ENCODE measurements at regions of chr7 and their contacts with region 1.

Region 1: DNA sequence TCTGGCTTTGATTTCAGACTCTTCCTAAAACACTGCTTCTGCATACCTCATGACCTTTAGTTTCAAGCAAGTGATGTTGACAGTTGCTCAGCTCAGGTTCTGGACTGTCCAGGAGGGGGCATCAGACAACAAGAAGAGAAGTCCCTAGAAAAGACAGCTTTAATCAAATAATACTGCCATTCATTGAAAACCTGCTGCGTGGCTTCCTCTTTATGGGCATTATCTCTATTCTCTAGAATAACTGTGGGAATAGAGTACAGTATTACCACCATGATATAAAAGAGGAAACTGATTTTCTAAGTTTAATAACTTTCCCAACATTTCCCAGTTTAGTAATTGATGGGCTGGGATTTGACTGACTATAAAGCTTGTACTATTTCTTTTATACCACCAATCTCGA is 170.4 kb downstream of the SNX13 start:
- DNase-seq: peak; percentile 78
- ATAC-seq: peak; percentile 86
- H3K4me3 Mint-ChIP-seq: no peak overlapping the region
- H3K27ac Mint-ChIP-seq: no peak overlapping the region
- H3K4me1 Mint-ChIP-seq: peaks cover 47% of the 10 kb centered on the region
- H3K27me3 Mint-ChIP-seq: no peaks in the 10 kb centered on the region
- CTCF ChIP-seq: peak; percentile 59

Region 2: GRCh38 chr7:17680943-17681351 is 89.0 kb before region 1 on chr7:
- CTCF ChIA-PET with region 1: interaction called, 11 read pairs
- POLR2A ChIA-PET with region 1: no interaction called
- DNase-seq: no peak
- ATAC-seq: peak; percentile 24; the same call in 1 of the 2 replicates
- H3K4me3 Mint-ChIP-seq: no peak overlapping the region
- H3K27ac Mint-ChIP-seq: no peak overlapping the region
- H3K4me1 Mint-ChIP-seq: peaks cover 12% of the 10 kb centered on the region
- H3K27me3 Mint-ChIP-seq: no peaks in the 10 kb centered on the region
- CTCF ChIP-seq: peak; percentile 40

Region 3: DNA sequence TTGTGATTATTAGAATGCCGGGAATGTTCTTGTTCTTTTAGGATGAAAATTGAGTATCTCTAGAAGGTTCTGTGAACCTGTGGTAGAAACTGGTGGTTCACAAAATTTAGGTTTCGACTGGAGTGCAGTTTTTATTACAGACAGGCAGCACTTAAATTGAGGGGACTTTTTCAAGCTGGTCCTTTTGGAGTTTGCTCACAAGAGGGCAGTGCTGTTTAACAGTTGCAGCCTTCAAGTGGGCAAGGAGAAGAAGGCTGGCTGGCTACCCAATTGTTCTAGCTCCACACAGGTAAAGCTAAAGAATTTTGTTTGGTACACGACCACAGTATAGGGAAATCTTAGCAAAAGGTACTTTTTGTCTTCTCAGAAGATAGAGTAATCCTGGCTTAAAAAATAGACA is 63.2 kb before region 1 on chr7:
- CTCF ChIA-PET with region 1: interaction called, 38 read pairs
- POLR2A ChIA-PET with region 1: interaction called, 6 read pairs
- DNase-seq: peak; percentile 60
- ATAC-seq: peak; percentile 89
- H3K4me3 Mint-ChIP-seq: no peak overlapping the region
- H3K27ac Mint-ChIP-seq: no peak overlapping the region
- H3K4me1 Mint-ChIP-seq: peaks cover 7% of the 10 kb centered on the region; the same call in 1 of the 2 replicates
- H3K27me3 Mint-ChIP-seq: no peaks in the 10 kb centered on the region
- CTCF ChIP-seq: peak; percentile 46; the same call in 1 of the 2 replicates

Region 4: DNA sequence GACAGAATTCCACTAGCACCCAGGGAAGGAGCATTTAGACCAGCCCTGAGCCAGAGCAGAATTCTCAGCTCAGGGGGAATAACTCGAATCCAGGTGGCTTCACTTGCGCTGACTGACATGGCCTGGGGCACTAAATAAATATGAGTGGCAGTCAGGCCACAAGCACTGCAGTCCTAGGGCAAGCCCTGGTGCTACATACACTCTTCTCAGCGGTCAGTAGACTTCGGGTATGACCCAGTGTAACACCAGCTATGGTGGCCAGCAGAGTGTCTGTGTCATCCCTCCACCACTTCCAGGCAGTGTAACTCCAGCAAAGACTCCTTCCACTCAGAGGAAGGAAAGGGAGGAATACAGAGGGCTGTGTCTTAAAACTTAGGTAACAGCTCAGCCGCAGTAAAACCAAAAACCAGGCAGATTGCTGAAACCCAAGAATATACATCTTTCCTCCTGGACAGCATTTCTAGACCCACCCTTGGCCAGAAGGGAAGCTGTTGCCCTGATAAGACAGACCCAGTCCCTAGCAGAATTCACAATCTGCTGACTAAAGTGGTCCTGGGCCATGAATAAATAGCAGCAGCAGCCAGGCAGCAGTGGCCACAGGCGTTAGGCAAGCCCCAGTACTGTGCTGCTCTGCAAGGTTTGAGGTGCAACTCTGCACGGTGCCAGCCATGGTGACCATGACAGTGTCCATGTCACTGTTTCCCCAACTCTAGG is 93.3 kb after region 1 on chr7:
- CTCF ChIA-PET with region 1: interaction called, 13 read pairs
- POLR2A ChIA-PET with region 1: no interaction called
- DNase-seq: no peak
- ATAC-seq: peak; percentile 71
- H3K4me3 Mint-ChIP-seq: no peak overlapping the region
- H3K27ac Mint-ChIP-seq: peak overlapping the region; percentile 43
- H3K4me1 Mint-ChIP-seq: peaks cover 16% of the 10 kb centered on the region
- H3K27me3 Mint-ChIP-seq: no peaks in the 10 kb centered on the region
- CTCF ChIP-seq: no peak

Region 5: DNA sequence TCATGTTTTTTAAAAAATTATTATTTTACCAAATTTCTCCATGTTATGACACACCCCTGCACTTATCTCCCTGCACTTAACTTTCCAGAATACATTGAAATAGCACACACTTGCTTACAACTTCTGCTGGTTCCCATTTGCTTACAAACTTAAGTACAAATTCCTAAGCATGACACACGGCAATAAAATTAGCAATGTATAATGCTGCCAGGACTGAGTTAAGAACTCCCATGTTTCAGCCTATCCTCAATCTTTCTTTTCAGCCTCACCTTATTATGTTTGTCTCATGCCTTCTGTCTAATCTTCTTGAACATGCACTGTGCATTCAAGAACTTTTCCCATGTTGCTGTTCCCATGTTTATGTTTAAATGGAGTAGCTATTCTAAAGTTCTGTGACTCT is 216.9 kb after region 1 on chr7:
- CTCF ChIA-PET with region 1: interaction called, 96 read pairs
- POLR2A ChIA-PET with region 1: no interaction called
- DNase-seq: no peak
- ATAC-seq: no peak
- H3K4me3 Mint-ChIP-seq: no peak overlapping the region
- H3K27ac Mint-ChIP-seq: no peak overlapping the region
- H3K4me1 Mint-ChIP-seq: peaks cover 3% of the 10 kb centered on the region
- H3K27me3 Mint-ChIP-seq: no peaks in the 10 kb centered on the region; the same call in 1 of the 2 replicates
- CTCF ChIP-seq: no peak

Region 6: DNA sequence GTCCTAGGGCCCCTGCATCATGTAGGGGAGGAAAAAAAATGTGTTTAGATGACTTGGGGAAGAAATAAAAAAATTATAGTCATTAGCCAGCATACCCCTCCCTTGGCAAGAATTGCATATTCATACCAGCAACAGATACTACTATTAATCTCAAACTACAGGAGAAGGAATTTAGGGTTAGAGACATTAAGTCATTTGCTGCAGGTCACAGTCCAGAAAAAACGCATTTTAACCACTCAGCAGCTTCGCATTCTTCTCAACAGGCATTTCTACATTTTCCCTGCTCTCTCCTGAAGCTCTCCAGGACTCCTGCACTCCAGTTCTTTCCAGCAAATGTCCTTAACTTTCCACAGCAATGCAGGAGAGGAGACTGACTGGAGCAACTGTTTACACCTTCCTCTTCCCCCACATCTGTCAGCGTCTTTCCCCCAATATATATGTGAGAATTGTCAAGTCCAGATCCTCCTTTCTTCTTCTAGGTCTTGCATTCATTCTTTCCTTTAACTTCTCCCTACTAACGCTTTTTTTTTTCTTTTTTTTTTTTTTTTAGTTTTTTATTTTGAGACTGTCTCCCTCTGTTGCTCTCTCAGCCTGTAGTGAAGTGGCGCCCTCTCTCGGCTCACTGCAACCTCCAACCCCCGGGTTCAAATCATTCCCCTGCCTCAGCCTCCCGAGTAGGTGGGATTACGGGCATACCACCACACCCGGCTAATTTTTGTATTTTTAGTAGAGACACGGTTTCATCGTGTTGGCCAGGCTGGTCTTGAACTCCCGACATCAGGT is 222.1 kb after region 1 on chr7:
- CTCF ChIA-PET with region 1: interaction called, 96 read pairs
- POLR2A ChIA-PET with region 1: no interaction called
- DNase-seq: peak; percentile 71
- ATAC-seq: peak; percentile 89
- H3K4me3 Mint-ChIP-seq: no peak overlapping the region
- H3K27ac Mint-ChIP-seq: no peak overlapping the region; the same call in 1 of the 2 replicates
- H3K4me1 Mint-ChIP-seq: peaks cover 6% of the 10 kb centered on the region
- H3K27me3 Mint-ChIP-seq: no peaks in the 10 kb centered on the region
- CTCF ChIP-seq: peak; percentile 33; the same call in 1 of the 2 replicates

Region 7: GRCh38 chr7:18064242-18064838 is 294.4 kb after region 1 on chr7:
- CTCF ChIA-PET with region 1: interaction called, 13 read pairs
- POLR2A ChIA-PET with region 1: no interaction called
- DNase-seq: peak; percentile 71
- ATAC-seq: peak; percentile 93
- H3K4me3 Mint-ChIP-seq: no peak overlapping the region
- H3K27ac Mint-ChIP-seq: no peak overlapping the region
- H3K4me1 Mint-ChIP-seq: peaks cover 14% of the 10 kb centered on the region
- H3K27me3 Mint-ChIP-seq: no peaks in the 10 kb centered on the region
- CTCF ChIP-seq: peak; percentile 41

Measured in WTC11 (cell line).